Activated T-helper 2 cell treated with anti-CD3 and anti-CD28 coated beads, Interferon-gamma antibody, Interleukin-2, Interleukin-4, amounts not matched to agents 10 μg/mL and 5 μg/mL and 100 μg/mL, durations not matched to agents 14 hours and 24 hours and 36 hours (primary cell): ENCODE measurements at regions of chr5 and their contacts with region 1.

Region 1: DNA sequence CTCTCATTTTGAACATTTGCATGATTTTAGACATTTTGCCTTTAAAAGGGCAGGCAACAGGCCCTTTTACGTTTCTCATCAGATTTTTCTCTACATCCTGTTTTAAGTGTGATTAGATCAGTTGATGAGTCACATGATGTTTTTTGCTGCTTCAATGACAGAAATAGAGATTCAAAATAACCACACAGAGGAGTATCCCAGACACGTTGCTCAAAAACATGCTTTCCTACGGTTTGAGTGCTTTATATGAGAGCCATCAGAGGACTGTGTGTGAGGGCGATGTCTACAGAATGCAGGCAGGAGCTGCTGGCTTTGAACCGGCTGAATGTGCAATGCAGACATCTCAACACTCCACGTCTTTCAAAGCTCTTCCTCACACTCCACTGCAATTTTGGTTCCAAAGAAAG is 42.1 kb downstream of the OTULIN start:
- DNase-seq: peak; percentile 46
- H3K4me3 Mint-ChIP-seq: peak overlapping the region; percentile 79
- H3K27ac Mint-ChIP-seq: peak overlapping the region; percentile 99
- H3K4me1 Mint-ChIP-seq: peaks cover 76% of the 10 kb centered on the region
- H3K27me3 Mint-ChIP-seq: no peaks in the 10 kb centered on the region

Region 2: GRCh38 chr5:14675865-14676300 is 30.7 kb before region 1 on chr5:
- intact Hi-C with region 1: loop called (anchors 2 kb)
- DNase-seq: no peak
- H3K4me3 Mint-ChIP-seq: peak overlapping the region; percentile 42
- H3K27ac Mint-ChIP-seq: peak overlapping the region; percentile 88
- H3K4me1 Mint-ChIP-seq: peaks cover 66% of the 10 kb centered on the region
- H3K27me3 Mint-ChIP-seq: no peaks in the 10 kb centered on the region

Region 3: GRCh38 chr5:14685757-14686156 is 20.9 kb before region 1 on chr5:
- intact Hi-C with region 1: loop called (anchors 1 kb)
- DNase-seq: peak; percentile 21
- H3K4me3 Mint-ChIP-seq: no peak overlapping the region
- H3K27ac Mint-ChIP-seq: peak overlapping the region; percentile 48
- H3K4me1 Mint-ChIP-seq: peaks cover 16% of the 10 kb centered on the region
- H3K27me3 Mint-ChIP-seq: no peaks in the 10 kb centered on the region